AG04449 (cell line): ENCODE measurements at regions of chr4 and their contacts with region 1.

Region 1: DNA sequence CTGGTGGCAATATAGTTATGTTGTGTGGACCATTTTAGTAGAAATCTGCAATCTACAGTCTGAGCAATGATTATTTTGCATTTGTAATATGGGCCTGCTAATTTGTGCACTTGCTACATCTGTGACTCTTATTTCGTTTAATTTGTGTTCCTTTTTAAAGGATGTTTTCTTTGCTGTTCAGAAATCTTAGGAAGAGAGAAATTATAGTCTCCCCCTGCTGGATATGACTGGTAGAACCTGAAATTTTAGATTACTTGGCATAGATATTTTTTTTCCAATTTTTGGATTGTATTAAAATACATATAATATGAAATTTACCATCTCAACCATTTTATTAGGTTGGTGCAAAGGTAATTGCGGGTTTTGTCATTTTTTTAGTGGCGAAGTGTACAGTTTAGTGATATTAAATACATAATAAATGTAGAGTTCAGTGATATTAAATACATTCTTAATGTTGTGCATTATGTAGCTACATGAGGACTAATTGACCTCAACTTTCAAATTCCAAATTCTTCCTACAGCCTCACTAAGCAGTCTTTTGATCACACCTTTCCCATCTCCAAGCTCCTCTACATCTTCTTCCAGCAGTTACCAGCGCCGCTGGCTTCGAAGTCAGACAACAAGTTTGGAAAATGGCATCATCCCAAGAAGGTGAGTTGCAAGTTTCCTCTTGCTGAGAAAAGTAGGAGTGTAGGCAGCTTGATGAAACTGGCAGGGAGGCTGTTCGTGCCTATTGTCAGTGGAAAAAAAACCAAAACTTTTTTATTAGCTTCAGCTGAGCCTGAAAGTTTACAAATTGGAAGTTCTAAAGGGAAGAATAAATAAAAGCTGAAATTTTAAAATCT is 82.2 kb downstream of the FNIP2 start:
- DNase-seq: no peak
- H3K4me3 ChIP-seq: no peak overlapping the region
- CTCF ChIP-seq: peak; percentile 29

Region 2: GRCh38 chr4:158710814-158711213 is 140.2 kb before region 1 on chr4:
- CTCF ChIA-PET with region 1: interaction called, 20 read pairs
- POLR2A ChIA-PET with region 1: no interaction called
- DNase-seq: no peak
- H3K4me3 ChIP-seq: no peak overlapping the region
- CTCF ChIP-seq: peak; percentile 39

Region 3: DNA sequence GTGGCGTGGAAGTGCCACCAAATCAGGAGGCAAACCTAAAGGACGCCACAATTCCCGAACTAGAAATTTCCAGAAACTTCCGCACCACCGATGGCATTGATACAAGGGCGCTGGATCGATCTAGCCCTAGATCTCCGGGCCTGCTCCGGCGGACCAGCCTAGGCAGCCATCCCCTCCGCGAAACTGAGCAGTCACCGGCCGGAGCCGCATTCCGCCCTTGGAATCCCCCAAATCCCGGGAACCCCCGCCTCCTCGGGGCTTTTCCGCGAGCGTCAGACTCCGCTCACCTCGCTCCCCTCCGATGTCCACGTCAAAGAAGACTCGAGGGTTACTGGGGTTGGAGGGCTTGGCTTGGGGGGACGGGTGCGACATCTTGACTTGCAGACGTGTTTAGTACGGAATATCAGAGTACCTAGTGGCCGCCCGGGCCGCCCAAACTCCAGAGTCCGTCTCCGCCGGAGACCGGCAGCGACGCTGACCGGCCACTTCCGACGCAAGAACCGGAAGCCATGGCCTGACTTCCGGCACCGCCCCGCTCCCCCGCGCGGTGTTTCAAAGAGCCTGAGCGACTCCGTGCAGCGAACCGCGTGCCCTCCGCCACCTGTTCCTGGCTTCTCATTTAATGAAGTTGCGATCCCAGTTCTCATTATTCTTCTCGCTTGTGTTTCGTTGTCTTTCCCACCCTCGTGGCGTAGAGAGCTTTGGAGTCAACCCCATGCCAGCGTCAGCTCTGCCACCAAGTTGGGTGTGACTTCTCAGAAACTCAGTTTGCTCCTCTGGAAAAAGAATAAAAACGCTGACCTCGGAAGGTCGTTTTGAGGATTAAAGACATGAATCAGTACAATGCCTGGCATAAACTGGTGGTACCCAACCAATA is 127.9 kb before region 1 on chr4 and contains the start of gene PPID:
- CTCF ChIA-PET with region 1: interaction called, 51 read pairs
- POLR2A ChIA-PET with region 1: no interaction called
- DNase-seq: no peak
- H3K4me3 ChIP-seq: peak within 1 kb of the TSS; percentile 79
- CTCF ChIP-seq: no peak

Region 4: GRCh38 chr4:158729716-158730559 is 121.1 kb before region 1 on chr4:
- CTCF ChIA-PET with region 1: interaction called, 51 read pairs
- POLR2A ChIA-PET with region 1: no interaction called
- DNase-seq: no peak
- H3K4me3 ChIP-seq: no peak overlapping the region
- CTCF ChIP-seq: peak; percentile 79

Region 5: DNA sequence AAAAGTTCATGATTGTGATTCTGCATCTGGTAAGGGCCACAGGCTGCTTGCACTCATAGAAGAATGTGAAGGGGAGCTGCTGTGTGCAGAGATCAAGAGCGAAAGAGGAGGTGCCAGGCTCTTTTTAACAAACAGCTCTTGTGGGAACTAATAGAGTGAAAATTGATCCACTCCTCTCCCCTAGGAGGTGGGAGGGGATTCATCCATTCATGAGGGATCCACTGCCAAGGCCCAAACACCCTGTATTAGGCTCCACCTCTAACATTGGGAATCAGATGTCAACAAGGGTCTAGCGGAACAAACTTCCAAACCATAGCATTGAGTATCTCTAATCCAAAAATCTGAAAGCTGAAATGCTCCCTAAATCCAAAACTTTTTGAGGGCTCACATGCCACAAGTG is 111.4 kb before region 1 on chr4:
- CTCF ChIA-PET with region 1: interaction called, 15 read pairs
- POLR2A ChIA-PET with region 1: no interaction called
- DNase-seq: no peak
- H3K4me3 ChIP-seq: no peak overlapping the region
- CTCF ChIP-seq: no peak

Region 6: DNA sequence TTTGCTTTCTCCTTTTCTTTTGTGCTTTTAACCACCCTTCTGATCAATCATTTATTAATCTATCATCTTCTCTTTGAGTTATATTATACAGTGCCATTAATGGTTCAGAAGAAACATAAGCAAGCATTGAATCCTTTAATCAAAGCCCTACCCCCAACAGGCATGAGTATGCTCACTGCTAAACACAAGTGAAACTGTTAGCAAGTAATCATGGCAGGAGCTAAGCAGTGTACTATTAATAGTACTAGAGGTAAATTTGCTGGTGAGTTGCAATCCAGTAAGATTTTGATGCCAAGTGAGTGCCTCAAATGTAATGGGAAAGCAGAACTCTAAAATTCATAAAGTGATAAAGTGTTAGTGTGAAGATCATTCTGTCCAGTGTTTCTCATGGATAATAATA is 25.0 kb before region 1 on chr4:
- CTCF ChIA-PET with region 1: interaction called, 14 read pairs
- POLR2A ChIA-PET with region 1: no interaction called
- DNase-seq: no peak
- H3K4me3 ChIP-seq: no peak overlapping the region
- CTCF ChIP-seq: no peak

Region 7: DNA sequence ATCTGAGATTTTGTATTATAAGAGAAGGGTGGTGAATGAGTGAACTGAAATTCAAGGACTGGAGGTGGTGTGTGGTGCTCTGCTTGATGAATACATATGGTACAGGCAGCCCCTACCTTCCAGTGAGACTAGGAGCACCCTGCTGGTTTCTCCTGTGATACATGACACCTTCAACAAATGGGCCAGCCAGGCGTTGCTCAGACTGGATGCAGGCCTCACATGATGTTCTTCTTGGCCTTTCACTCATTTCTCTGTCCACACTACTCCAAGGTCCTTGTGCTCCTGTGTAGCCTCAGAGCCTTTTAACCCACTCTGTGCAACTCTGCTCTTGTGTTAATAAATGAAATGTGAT is 15.0 kb before region 1 on chr4:
- CTCF ChIA-PET with region 1: interaction called, 70 read pairs
- POLR2A ChIA-PET with region 1: no interaction called
- DNase-seq: no peak
- H3K4me3 ChIP-seq: no peak overlapping the region
- CTCF ChIP-seq: no peak